Activated CD8-positive, alpha-beta T cell treated with anti-CD3 and anti-CD28 coated beads, Interleukin-2, amount 10 ng/mL, durations not matched to agents 7 days and 5 days (primary cell): ENCODE measurements at regions of chr3 and their contacts with region 1.

Region 1: DNA sequence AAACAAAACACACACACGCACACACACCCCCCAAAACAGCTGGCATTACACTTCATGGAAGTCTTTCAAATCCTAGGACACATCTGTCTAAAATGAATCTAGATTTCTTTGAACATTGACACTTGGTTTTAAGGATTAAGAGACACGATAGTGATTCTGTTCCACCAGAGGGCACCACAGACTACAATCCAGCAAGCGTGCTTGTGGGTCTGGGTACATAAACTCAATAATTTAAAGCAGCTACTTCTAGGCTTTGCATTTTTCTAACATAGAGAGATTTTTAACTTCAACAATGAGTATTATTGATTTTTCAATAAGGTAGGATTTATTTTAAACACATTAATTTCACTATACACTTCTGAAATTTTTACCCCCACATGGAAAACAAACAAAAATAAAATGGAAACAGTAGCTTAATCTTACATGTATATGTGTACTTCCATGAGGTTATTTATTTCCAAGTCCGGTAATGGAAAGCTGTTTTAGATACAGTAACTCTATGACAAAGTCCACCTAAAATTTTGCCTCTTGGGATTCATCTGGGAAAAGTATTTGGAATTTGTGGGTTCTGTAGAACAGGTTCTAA is 564.0 kb upstream of the TGFBR2 start:
- DNase-seq: peak; percentile 75
- ATAC-seq: peak; percentile 67
- H3K4me3 Mint-ChIP-seq: no peak overlapping the region
- H3K27ac Mint-ChIP-seq: no peak overlapping the region
- H3K4me1 Mint-ChIP-seq: no peaks in the 10 kb centered on the region
- H3K27me3 Mint-ChIP-seq: peaks cover 15% of the 10 kb centered on the region

Region 2: GRCh38 chr3:29991198-29991597 is 51.2 kb before region 1 on chr3:
- CTCF ChIA-PET with region 1: no interaction called
- POLR2A ChIA-PET with region 1: no interaction called
- DNase-seq: no peak
- ATAC-seq: no peak
- H3K4me3 Mint-ChIP-seq: no peak overlapping the region
- H3K27ac Mint-ChIP-seq: no peak overlapping the region
- H3K4me1 Mint-ChIP-seq: no peaks in the 10 kb centered on the region
- H3K27me3 Mint-ChIP-seq: peaks cover 3% of the 10 kb centered on the region

Region 3: DNA sequence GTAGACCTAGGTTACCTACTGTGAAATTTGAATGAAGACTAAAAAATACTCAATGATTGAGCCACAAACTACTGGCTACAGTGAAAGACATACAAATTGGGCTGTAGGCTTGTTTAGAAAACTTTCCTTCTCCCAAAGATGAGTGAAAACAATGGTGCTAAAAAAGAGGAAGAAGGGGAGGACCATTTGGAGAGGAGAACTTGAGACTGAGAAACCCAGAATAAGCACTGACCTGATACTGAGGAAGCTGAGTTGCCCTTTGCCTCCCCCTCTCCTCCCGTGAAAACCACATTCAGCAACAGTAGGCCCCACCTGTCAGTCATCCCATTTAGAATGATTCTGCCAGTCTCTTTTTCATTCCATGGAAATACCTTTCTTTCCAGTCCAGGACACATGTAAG is 80.0 kb after region 1 on chr3:
- CTCF ChIA-PET with region 1: no interaction called
- POLR2A ChIA-PET with region 1: no interaction called
- DNase-seq: no peak
- ATAC-seq: no peak
- H3K4me3 Mint-ChIP-seq: no peak overlapping the region
- H3K27ac Mint-ChIP-seq: no peak overlapping the region
- H3K4me1 Mint-ChIP-seq: no peaks in the 10 kb centered on the region
- H3K27me3 Mint-ChIP-seq: no peaks in the 10 kb centered on the region

Region 4: GRCh38 chr3:30742796-30743619 is 700.6 kb after region 1 on chr3:
- CTCF ChIA-PET with region 1: interaction called, 15 read pairs
- POLR2A ChIA-PET with region 1: no interaction called
- DNase-seq: no peak
- ATAC-seq: peak; percentile 36
- H3K4me3 Mint-ChIP-seq: peak overlapping the region; percentile 35
- H3K27ac Mint-ChIP-seq: peak overlapping the region; percentile 13
- H3K4me1 Mint-ChIP-seq: peaks cover 19% of the 10 kb centered on the region
- H3K27me3 Mint-ChIP-seq: no peaks in the 10 kb centered on the region

Region 5: DNA sequence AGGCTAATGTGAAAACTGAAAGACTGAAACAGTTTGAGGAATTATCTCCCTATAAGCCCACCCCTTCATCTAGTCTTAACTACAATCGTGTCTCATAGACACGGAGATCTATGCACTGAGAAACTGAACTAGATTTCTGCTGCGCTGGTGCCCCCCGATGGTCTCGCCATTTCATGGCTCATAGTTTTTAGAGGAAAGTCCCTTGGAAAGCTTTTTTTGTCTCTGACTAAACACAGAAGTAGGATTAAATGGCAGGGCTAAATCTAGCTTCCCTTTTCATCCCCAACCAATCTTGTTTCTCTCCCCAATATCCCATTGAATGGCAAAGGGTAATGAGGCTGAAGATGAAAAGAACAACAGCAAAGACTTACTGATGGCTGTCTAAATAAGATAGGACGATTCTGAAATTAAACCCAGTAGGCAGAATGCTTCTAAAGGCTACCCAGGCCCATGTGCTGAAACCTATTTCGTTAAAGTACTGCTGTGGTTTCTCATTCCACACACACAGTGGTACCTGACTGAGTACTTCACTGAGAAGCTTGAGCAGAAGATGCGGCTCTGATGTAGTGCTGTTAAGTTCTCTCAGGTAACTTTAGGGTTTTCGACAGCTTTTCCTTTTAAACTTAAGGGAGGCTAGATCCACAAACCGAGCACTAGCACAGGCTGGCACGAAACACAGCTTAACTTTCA is 709.4 kb after region 1 on chr3:
- CTCF ChIA-PET with region 1: interaction called, 50 read pairs
- POLR2A ChIA-PET with region 1: no interaction called
- DNase-seq: peak; percentile 70
- ATAC-seq: peak; percentile 79
- H3K4me3 Mint-ChIP-seq: no peak overlapping the region
- H3K27ac Mint-ChIP-seq: no peak overlapping the region
- H3K4me1 Mint-ChIP-seq: peaks cover 13% of the 10 kb centered on the region
- H3K27me3 Mint-ChIP-seq: no peaks in the 10 kb centered on the region